K562 (cell line): ENCODE measurements at regions of chr11 and their contacts with region 1.

Region 1: GRCh38 chr11:65117216-65118096 is at the start of gene ZNHIT2:
- DNase-seq: peak; percentile 84 to 99 (median 90)
- ATAC-seq: peak; percentile 78
- H3K4me3 ChIP-seq: peak within 1 kb of the TSS; percentile 95
- H3K27ac ChIP-seq: peak within 1 kb of the TSS; percentile 86
- H3K4me1 ChIP-seq: peaks cover 33 to 41% of the 10 kb centered on the region in 2 experiments
- H3K27me3 ChIP-seq: no peaks in the 10 kb centered on the region
- CTCF ChIP-seq: peak; percentile 85 to 97 (median 93)
- EP300 ChIP-seq: peak; percentile 18; the same call in 1 of the 2 replicates
- POLR2A ChIP-seq: peak; percentile 92
- RAD21 ChIP-seq: peak; percentile 84 to 85
- polyA plus RNA-seq, gene ZNHIT2: 0.08 to 0.20 TPM

Region 2: DNA sequence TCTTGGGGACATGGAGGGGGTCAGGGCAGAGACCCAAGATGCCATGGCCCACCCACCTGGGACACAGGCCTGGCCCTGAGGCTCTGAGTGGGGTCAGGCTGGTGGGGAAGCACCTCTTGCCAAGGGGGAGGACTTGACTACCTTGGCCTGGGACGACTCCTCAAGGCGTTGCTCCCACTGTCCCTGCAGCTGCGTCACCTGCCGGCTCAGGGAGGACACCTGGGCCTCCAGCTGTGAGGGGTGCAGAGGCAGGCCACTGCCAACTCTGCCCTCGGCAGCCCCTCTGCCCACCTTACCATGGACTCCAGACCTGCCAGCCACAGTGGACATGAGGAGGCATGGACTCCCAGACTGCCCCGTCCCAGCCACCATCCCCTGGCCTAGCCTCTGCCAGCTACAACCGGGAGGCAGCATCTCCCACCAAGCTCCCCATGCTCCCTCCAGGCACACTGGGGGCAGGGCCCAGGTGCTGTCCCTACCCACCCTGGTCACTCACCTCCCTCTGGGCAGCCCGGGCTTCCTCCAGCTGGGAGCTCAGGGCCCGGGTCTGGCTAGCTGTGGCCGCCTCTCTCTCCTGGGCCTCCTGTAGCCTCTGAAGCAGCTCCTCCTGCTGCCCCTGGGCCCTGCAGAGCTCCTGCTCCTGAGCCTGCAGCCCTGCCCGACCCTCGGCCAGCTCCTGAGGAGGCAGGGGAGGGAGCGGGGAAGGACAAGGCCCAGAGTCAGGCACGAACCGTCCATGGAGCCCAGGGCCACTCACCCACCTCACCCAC is 281.6 kb before region 1 on chr11:
- CTCF ChIA-PET with region 1: no interaction called
- POLR2A ChIA-PET with region 1: no interaction called
- in situ Hi-C with region 1: no loop called
- intact Hi-C with region 1: no loop called
- DNase-seq: no peak
- ATAC-seq: no peak
- H3K4me3 ChIP-seq: no peak overlapping the region
- H3K27ac ChIP-seq: no peak overlapping the region
- H3K4me1 ChIP-seq: peaks cover 0 to 38% of the 10 kb centered on the region in 2 experiments; a peak in 1 of 5 replicates
- H3K27me3 ChIP-seq: no peaks in the 10 kb centered on the region
- CTCF ChIP-seq: no peak
- EP300 ChIP-seq: no peak
- POLR2A ChIP-seq: no peak
- RAD21 ChIP-seq: no peak

Region 3: GRCh38 chr11:65180877-65181568 is 63.6 kb after region 1 on chr11:
- CTCF ChIA-PET with region 1: interaction called, 19 read pairs
- POLR2A ChIA-PET with region 1: interaction called, 15 read pairs
- in situ Hi-C with region 1: no loop called
- intact Hi-C with region 1: loop called (anchors 2 kb)
- DNase-seq: peak; percentile 73 to 84 (median 80)
- ATAC-seq: peak; percentile 86
- H3K4me3 ChIP-seq: peak overlapping the region; percentile 98
- H3K27ac ChIP-seq: peak overlapping the region; percentile 77
- H3K4me1 ChIP-seq: peaks cover 11 to 44% of the 10 kb centered on the region in 2 experiments
- H3K27me3 ChIP-seq: no peaks in the 10 kb centered on the region
- CTCF ChIP-seq: peak; percentile 68 to 77 (median 70)
- EP300 ChIP-seq: no peak
- POLR2A ChIP-seq: no peak
- RAD21 ChIP-seq: peak; percentile 64 to 73